PC-9 (cell line): ENCODE measurements at regions of chr4 and their contacts with region 1.

Region 1: GRCh38 chr4:86921608-86922252 is 13.1 kb upstream of the AFF1 start:
- DNase-seq: no peak
- H3K4me3 ChIP-seq: no peak overlapping the region
- H3K27ac ChIP-seq: no peak overlapping the region
- H3K4me1 ChIP-seq: peaks cover 8% of the 10 kb centered on the region
- H3K27me3 ChIP-seq: no peaks in the 10 kb centered on the region
- CTCF ChIP-seq: no peak

Region 2: GRCh38 chr4:86482311-86483172 is 439.2 kb before region 1 on chr4:
- CTCF ChIA-PET with region 1: no interaction called
- POLR2A ChIA-PET with region 1: no interaction called
- intact Hi-C with region 1: no loop called
- DNase-seq: no peak
- H3K4me3 ChIP-seq: no peak overlapping the region
- H3K27ac ChIP-seq: no peak overlapping the region
- H3K4me1 ChIP-seq: no peaks in the 10 kb centered on the region
- H3K27me3 ChIP-seq: no peaks in the 10 kb centered on the region
- CTCF ChIP-seq: no peak

Region 3: DNA sequence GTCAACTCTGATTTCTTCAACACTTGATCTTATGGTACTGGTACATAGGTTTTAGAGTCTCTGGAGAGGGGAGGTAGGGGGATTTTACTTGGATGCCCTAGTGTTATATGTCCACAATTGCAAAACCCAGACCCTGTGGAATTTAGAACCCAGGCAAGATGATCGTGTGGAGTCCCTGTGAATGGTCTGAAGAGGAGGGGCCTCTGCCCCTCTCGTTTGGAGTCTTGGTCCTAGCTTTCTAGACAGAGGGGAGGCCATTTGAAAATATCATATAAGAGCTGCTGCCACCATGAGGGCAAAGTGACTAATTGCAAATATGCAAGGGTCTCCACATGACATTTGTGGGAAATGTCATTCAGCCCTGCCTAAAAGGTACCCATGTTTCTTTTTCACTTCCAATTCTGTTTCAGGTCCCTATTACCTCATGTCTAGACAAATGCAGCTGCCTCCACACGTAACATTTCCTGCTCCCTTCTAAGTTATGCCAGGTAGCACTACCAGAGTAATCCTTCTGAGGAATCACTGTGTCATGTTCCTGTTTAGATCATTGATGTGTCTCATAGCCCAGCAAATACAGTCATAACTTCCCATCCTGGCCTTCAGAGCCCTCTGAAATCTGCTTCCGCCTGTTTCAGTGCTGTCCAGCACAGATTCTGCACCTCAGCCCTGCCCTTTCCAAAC is 171.9 kb after region 1 on chr4:
- CTCF ChIA-PET with region 1: interaction called, 9 read pairs
- POLR2A ChIA-PET with region 1: no interaction called
- intact Hi-C with region 1: loop called (anchors 1 kb)
- DNase-seq: no peak
- H3K4me3 ChIP-seq: no peak overlapping the region
- H3K27ac ChIP-seq: peak overlapping the region; percentile 82
- H3K4me1 ChIP-seq: peaks cover 27% of the 10 kb centered on the region
- H3K27me3 ChIP-seq: no peaks in the 10 kb centered on the region
- CTCF ChIP-seq: peak; percentile 50

Region 4: GRCh38 chr4:87235020-87235671 is 313.4 kb after region 1 on chr4:
- CTCF ChIA-PET with region 1: no interaction called
- POLR2A ChIA-PET with region 1: no interaction called
- intact Hi-C with region 1: loop called (anchors 1 kb)
- DNase-seq: no peak
- H3K4me3 ChIP-seq: peak overlapping the region; percentile 75; the same call in 1 of the 2 replicates
- H3K27ac ChIP-seq: no peak overlapping the region
- H3K4me1 ChIP-seq: peaks cover 5% of the 10 kb centered on the region
- H3K27me3 ChIP-seq: no peaks in the 10 kb centered on the region
- CTCF ChIP-seq: no peak